Activated naive CD8-positive, alpha-beta T cell treated with anti-CD3 and anti-CD28 coated beads, Interleukin-2, amount 10 ng/mL, durations not matched to agents 7 days and 5 days (primary cell): ENCODE measurements at regions of chr20 and their contacts with region 1.

Region 1: GRCh38 chr20:44642203-44643153 is 9.0 kb downstream of the ADA start:
- DNase-seq: peak; percentile 51
- ATAC-seq: peak; percentile 20
- H3K4me3 Mint-ChIP-seq: peak overlapping the region; percentile 60
- H3K27ac Mint-ChIP-seq: peak overlapping the region; percentile 87
- H3K4me1 Mint-ChIP-seq: peaks cover 73% of the 10 kb centered on the region
- H3K27me3 Mint-ChIP-seq: no peaks in the 10 kb centered on the region

Region 2: DNA sequence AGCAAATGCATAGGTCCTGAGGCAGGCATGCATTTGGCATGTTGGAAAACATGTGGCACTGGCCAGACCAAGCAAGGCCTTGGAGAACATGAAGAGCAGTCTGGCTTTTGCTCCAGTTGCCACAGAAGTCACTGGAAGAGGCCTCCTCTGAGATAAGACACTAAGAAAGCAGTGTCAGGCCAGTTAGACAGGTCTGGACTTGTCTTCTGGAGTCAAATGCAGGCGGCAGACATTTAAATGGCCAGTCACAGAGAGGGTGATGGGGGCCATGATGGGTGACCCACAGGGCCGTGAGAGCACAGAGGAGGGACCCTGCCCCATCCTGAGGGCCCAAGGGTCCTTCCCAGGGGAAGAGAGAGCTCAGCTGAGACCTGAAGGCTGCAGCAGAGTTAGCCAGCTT is 35.8 kb after region 1 on chr20:
- POLR2A ChIA-PET with region 1: interaction called, 31 read pairs
- DNase-seq: no peak
- ATAC-seq: no peak
- H3K4me3 Mint-ChIP-seq: no peak overlapping the region
- H3K27ac Mint-ChIP-seq: peak overlapping the region; percentile 36
- H3K4me1 Mint-ChIP-seq: no peaks in the 10 kb centered on the region
- H3K27me3 Mint-ChIP-seq: no peaks in the 10 kb centered on the region

Region 3: GRCh38 chr20:44683263-44684046 is 41.0 kb after region 1 on chr20:
- POLR2A ChIA-PET with region 1: interaction called, 31 read pairs
- DNase-seq: peak; percentile 66
- ATAC-seq: peak; percentile 88
- H3K4me3 Mint-ChIP-seq: no peak overlapping the region
- H3K27ac Mint-ChIP-seq: no peak overlapping the region
- H3K4me1 Mint-ChIP-seq: peaks cover 8% of the 10 kb centered on the region
- H3K27me3 Mint-ChIP-seq: peaks cover 3% of the 10 kb centered on the region